K562 (cell line): ENCODE measurements at regions of chr7 and their contacts with region 1.

Region 1: DNA sequence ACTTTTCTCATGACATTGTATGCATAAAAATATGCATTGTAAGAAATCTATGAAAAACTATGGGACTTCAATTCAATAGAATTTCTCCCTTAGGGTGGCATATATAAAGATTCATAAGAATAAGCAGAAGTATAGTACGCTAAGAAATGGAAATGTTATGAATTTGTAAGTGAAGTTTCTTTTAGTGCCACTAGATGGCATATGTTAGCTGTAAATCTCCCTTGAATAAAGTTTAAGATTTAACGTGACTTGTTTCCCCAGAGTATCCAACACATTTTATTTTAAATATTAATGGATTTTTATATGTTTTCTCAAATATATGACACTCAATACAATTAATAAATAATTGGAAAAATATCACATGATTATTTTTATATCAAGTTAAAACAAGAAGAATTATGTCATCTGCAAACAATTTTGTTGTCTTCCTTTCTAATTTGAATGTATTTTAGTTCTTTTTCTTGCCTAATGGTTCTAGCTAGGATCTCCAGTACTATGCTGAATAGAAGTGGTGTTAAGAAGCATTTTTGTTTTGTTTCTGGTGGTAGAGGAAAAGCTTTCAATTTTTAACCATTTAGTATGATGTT is 287.2 kb downstream of the HGF start:
- DNase-seq: peak; percentile 15 to 32 (median 24)
- ATAC-seq: peak; percentile 51; the same call in 1 of the 3 replicates
- H3K4me3 ChIP-seq: no peak overlapping the region
- H3K27ac ChIP-seq: no peak overlapping the region
- H3K4me1 ChIP-seq: no peaks in the 10 kb centered on the region
- H3K27me3 ChIP-seq: no peaks in the 10 kb centered on the region
- CTCF ChIP-seq: peak in 2 of 3 experiments; percentile 16 to 66; a peak in 3 of 6 replicates
- EP300 ChIP-seq: no peak
- POLR2A ChIP-seq: no peak
- RAD21 ChIP-seq: peak; percentile 57 to 70

Region 2: GRCh38 chr7:80900583-80901576 is 581.8 kb before region 1 on chr7:
- CTCF ChIA-PET with region 1: no interaction called
- POLR2A ChIA-PET with region 1: no interaction called
- in situ Hi-C with region 1: no loop called
- intact Hi-C with region 1: no loop called
- DNase-seq: no peak
- ATAC-seq: no peak
- H3K4me3 ChIP-seq: no peak overlapping the region
- H3K27ac ChIP-seq: no peak overlapping the region
- H3K4me1 ChIP-seq: no peaks in the 10 kb centered on the region
- H3K27me3 ChIP-seq: no peaks in the 10 kb centered on the region
- CTCF ChIP-seq: no peak
- EP300 ChIP-seq: no peak
- POLR2A ChIP-seq: no peak
- RAD21 ChIP-seq: no peak

Region 3: DNA sequence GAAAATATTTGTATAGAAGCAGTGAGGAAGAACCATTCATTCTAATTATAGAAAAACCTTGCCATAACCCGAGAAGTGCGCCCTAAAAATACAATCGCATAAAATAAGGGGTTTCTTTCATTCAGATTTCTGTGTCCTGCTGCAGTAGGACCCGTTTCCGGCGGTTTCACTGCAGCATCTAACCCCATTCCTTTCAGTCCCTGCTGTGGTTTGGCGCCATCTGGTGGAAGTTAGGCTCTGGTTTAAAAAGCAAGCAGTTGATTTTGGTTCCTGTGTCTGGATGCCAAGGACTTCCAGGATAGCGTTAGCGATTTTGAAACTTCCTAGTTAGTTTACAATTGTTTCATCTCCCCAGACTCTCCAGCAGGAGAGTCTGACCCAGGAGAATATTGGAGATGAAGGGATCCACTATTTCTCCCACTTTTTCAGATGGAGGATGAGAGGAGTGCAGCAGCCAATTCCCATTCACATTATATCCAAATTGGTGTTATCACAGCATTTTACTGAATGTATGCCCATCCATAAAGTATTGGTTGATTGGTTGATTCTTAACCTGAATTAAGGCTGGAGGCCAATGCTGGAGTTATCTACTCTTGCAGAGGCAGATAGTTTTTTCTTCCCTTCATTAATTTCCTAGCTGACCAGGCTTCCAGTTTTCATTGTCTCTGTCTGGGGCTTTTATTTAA is 1089.6 kb after region 1 on chr7:
- CTCF ChIA-PET with region 1: interaction called, 5 read pairs
- POLR2A ChIA-PET with region 1: no interaction called
- in situ Hi-C with region 1: loop called (anchors 25 kb)
- intact Hi-C with region 1: loop called (anchors 2 kb)
- DNase-seq: peak; percentile 60 to 74 (median 64)
- ATAC-seq: peak; percentile 78
- H3K4me3 ChIP-seq: no peak overlapping the region
- H3K27ac ChIP-seq: no peak overlapping the region
- H3K4me1 ChIP-seq: no peaks in the 10 kb centered on the region
- H3K27me3 ChIP-seq: no peaks in the 10 kb centered on the region
- CTCF ChIP-seq: peak; percentile 64 to 69 (median 68)
- EP300 ChIP-seq: no peak
- POLR2A ChIP-seq: no peak
- RAD21 ChIP-seq: peak; percentile 42 to 72

Region 4: GRCh38 chr7:82605247-82605872 is 1122.7 kb after region 1 on chr7:
- CTCF ChIA-PET with region 1: interaction called, 12 read pairs
- POLR2A ChIA-PET with region 1: interaction called, 4 read pairs
- in situ Hi-C with region 1: loop called (anchors 10 kb)
- intact Hi-C with region 1: loop called (anchors 5 kb)
- DNase-seq: peak; percentile 29 to 47 (median 43)
- ATAC-seq: 0 out of 3 replicates have a peak, but pooled peaks have one; percentile 31
- H3K4me3 ChIP-seq: no peak overlapping the region
- H3K27ac ChIP-seq: no peak overlapping the region
- H3K4me1 ChIP-seq: no peaks in the 10 kb centered on the region
- H3K27me3 ChIP-seq: no peaks in the 10 kb centered on the region
- CTCF ChIP-seq: peak; percentile 42 to 75 (median 59); a peak in 5 of 6 replicates
- EP300 ChIP-seq: no peak
- POLR2A ChIP-seq: no peak
- RAD21 ChIP-seq: peak; percentile 48 to 76

Region 5: DNA sequence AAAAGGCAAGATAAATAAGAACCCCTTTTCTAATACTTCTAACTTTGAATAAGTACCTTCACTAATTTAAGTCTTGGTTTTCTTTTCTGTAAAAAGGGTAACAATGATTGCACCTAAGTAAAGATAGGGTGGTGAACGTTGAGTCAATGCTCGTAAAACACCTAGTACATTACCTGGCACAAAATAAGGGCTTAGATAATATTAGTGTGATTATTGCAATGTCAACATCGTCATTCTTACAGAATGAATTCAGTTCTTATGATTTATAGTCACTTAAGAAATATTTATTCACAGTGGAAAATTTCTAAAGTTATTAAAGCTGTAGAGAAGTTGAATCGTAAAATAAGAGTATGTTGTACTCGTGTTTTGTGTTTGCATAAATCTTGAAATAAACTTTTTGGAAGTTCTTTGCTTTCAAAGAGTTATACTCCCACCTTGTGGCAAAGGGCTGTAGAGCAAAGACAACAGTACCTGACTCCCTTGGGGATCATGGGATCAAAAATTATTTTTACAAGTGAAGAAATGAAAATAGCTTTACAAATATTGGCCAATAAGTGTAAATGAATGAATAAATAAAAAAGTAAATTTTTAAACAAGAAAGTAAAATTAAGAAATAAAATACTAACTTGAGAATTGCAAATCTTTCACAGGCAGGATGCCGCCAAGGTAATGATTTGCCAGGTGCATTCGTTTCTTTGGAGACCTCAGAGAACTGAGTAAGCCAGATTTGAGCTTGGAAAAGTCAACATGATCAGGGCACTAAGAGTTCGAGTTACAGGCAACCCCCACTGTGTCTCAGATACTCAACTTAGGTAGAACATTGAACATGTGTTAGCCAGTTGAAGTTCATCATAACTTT is 1246.7 kb after region 1 on chr7:
- CTCF ChIA-PET with region 1: no interaction called
- POLR2A ChIA-PET with region 1: no interaction called
- in situ Hi-C with region 1: loop called (anchors 25 kb)
- intact Hi-C with region 1: loop called (anchors 2 kb)
- DNase-seq: peak; percentile 5 to 18 (median 14)
- ATAC-seq: no peak
- H3K4me3 ChIP-seq: no peak overlapping the region
- H3K27ac ChIP-seq: no peak overlapping the region
- H3K4me1 ChIP-seq: no peaks in the 10 kb centered on the region
- H3K27me3 ChIP-seq: no peaks in the 10 kb centered on the region
- CTCF ChIP-seq: peak in 2 of 3 experiments; percentile 27 to 46; a peak in 3 of 6 replicates
- EP300 ChIP-seq: no peak
- POLR2A ChIP-seq: no peak
- RAD21 ChIP-seq: peak; percentile 41 to 44